Left colon (tissue), 2 donors: ENCODE measurements at regions of chr4 and their contacts with region 1.

Region 1: GRCh38 chr4:148980782-148981480 is 538.7 kb upstream of the NR3C2 start:
- DNase-seq: no peak
- ATAC-seq: no peak

Region 2: DNA sequence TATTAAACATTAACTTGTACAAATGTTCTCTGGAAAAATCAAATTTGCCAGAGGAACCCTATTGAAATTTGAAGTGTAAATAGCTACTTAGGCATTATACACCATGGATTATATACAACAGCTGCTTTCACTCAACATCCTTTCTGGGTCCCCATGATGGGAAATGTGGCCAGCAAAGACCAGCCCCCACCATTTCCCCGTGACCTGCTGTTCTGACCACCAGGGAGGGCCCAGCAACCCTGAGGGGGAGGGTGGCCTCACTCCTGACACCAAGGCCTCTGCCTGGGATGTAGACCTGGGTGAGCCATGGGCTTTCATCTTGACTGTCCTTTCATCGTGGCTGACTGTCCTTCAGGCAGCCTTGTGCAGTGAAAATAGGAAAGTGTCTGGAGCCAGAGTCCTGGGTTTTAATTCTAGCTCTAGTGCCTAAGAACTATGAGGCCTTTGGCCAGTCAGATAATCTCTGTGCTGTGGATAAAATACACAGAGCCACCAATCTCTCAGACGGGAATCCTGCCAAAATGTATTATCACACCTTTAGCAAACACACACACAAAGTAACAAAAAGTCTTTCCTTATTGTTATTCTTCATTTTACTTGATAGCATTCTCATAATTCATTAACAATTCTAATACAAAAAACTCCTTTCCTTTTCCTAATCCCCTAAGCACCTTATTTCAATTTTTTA is 583.8 kb before region 1 on chr4:
- intact Hi-C with region 1: loop called in 1 of 2 experiments (anchors 10 kb)
- DNase-seq: peak in 1 of 2 donors; percentile 13
- ATAC-seq: peak; percentile 94

Region 3: GRCh38 chr4:148749403-148749802 is 231.5 kb before region 1 on chr4:
- intact Hi-C with region 1: no loop called
- DNase-seq: no peak
- ATAC-seq: no peak